PC-9 (cell line): ENCODE measurements at regions of chr20 and their contacts with region 1.

Region 1: GRCh38 chr20:5008759-5009158 is 7.4 kb upstream of the SLC23A2 start:
- DNase-seq: peak; percentile 60 to 92
- H3K4me3 ChIP-seq: no peak overlapping the region
- H3K27ac ChIP-seq: peak overlapping the region; percentile 93
- H3K4me1 ChIP-seq: peaks cover 14% of the 10 kb centered on the region
- H3K27me3 ChIP-seq: no peaks in the 10 kb centered on the region
- CTCF ChIP-seq: no peak

Region 2: GRCh38 chr20:5033571-5033970 is 24.8 kb after region 1 on chr20:
- CTCF ChIA-PET with region 1: no interaction called
- POLR2A ChIA-PET with region 1: no interaction called
- intact Hi-C with region 1: loop called (anchors 2 kb)
- DNase-seq: peak; percentile 13 to 87
- H3K4me3 ChIP-seq: no peak overlapping the region
- H3K27ac ChIP-seq: peak overlapping the region; percentile 87
- H3K4me1 ChIP-seq: peaks cover 53% of the 10 kb centered on the region
- H3K27me3 ChIP-seq: no peaks in the 10 kb centered on the region
- CTCF ChIP-seq: no peak

Region 3: GRCh38 chr20:5046656-5047339 is 38.0 kb after region 1 on chr20:
- CTCF ChIA-PET with region 1: no interaction called
- POLR2A ChIA-PET with region 1: no interaction called
- intact Hi-C with region 1: no loop called
- DNase-seq: no peak
- H3K4me3 ChIP-seq: no peak overlapping the region
- H3K27ac ChIP-seq: no peak overlapping the region
- H3K4me1 ChIP-seq: no peaks in the 10 kb centered on the region
- H3K27me3 ChIP-seq: no peaks in the 10 kb centered on the region
- CTCF ChIP-seq: no peak

Region 4: GRCh38 chr20:5109276-5109675 is 100.5 kb after region 1 on chr20:
- CTCF ChIA-PET with region 1: no interaction called
- POLR2A ChIA-PET with region 1: no interaction called
- intact Hi-C with region 1: no loop called
- DNase-seq: peak in 1 of 2 experiments; percentile 18
- H3K4me3 ChIP-seq: no peak overlapping the region
- H3K27ac ChIP-seq: no peak overlapping the region
- H3K4me1 ChIP-seq: peaks cover 15% of the 10 kb centered on the region
- H3K27me3 ChIP-seq: no peaks in the 10 kb centered on the region
- CTCF ChIP-seq: no peak